ENCODE measurements at regions of chr3 and their contacts with region 1.

Region 1: GRCh38 chr3:17233398-17233800 is 348.6 kb downstream of the PLCL2 start:
- DNase-seq: no peak
- ATAC-seq: peak; percentile 91 to 95
- H3K4me3 ChIP-seq: no peak overlapping the region
- H3K27ac ChIP-seq: peak overlapping the region in 2 of 4 donors; percentile 48 to 61
- H3K4me1 ChIP-seq: peaks cover 35 to 38% of the 10 kb centered on the region in 2 donors
- H3K27me3 ChIP-seq: no peaks in the 10 kb centered on the region
- CTCF ChIP-seq: peak; percentile 63 to 80 (median 76)
- POLR2A ChIP-seq: no peak

Region 2: GRCh38 chr3:16589867-16590624 is 643.4 kb before region 1 on chr3:
- in situ Hi-C with region 1: loop called in 3 of 4 experiments (anchors 5 to 10 kb)
- intact Hi-C with region 1: no loop called
- DNase-seq: no peak
- ATAC-seq: no peak
- H3K4me3 ChIP-seq: no peak overlapping the region
- H3K27ac ChIP-seq: no peak overlapping the region
- H3K4me1 ChIP-seq: no peaks in the 10 kb centered on the region
- H3K27me3 ChIP-seq: no peaks in the 10 kb centered on the region
- CTCF ChIP-seq: no peak
- POLR2A ChIP-seq: no peak

Region 3: GRCh38 chr3:16600780-16601539 is 632.4 kb before region 1 on chr3:
- in situ Hi-C with region 1: loop called in 3 of 4 experiments (anchors 5 to 10 kb)
- intact Hi-C with region 1: loop called (anchors 1 kb)
- DNase-seq: peak; percentile 50 to 66
- ATAC-seq: peak; percentile 72 to 87
- H3K4me3 ChIP-seq: no peak overlapping the region
- H3K27ac ChIP-seq: no peak overlapping the region
- H3K4me1 ChIP-seq: peaks cover 0 to 5% of the 10 kb centered on the region in 2 donors
- H3K27me3 ChIP-seq: no peaks in the 10 kb centered on the region
- CTCF ChIP-seq: peak; percentile 79 to 92 (median 88)
- POLR2A ChIP-seq: no peak

Region 4: DNA sequence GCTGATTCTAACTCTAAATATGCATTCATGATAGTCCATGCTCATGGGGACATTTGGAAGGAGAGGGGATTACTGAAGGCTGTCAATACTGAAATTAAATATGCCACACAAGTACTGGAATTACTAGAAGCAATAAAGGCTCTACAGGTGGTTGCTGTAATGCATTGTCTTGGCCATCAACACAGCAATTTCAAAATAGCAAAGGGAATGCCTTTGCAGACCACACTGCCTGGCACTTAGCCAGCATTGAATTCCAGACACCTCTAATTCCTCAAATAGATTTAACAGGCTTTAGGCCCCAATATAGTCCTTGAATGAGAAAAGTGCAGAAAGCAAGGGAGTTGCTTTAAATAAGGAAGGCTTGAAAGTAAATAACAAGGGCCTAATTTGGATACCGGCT is 464.4 kb before region 1 on chr3:
- in situ Hi-C with region 1: no loop called
- intact Hi-C with region 1: loop called (anchors 10 kb)
- DNase-seq: no peak
- ATAC-seq: no peak
- H3K4me3 ChIP-seq: no peak overlapping the region
- H3K27ac ChIP-seq: peak overlapping the region; percentile 76 to 94 (median 82)
- H3K4me1 ChIP-seq: peaks cover 43% of the 10 kb centered on the region in 2 donors
- H3K27me3 ChIP-seq: no peaks in the 10 kb centered on the region
- CTCF ChIP-seq: no peak
- POLR2A ChIP-seq: no peak

Region 5: DNA sequence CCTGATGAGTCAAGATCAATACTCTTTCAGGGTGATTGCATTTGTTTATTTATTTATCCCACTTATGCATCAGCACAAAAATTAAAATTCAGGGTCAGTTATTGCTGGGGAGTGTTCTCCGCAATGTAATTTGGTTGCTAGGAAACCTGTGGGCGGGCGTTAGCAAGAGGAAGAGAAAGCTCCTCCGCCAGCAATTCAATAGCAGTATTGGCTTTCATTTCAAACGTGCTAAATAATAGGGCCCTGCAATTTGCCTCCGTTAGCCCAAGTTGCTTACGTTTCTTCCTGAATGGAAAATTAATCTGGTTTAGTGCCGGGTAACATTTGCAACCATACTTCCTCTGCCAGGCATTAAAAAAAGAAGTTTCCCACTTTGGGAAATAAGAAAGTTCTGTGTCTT is 384.2 kb before region 1 on chr3:
- in situ Hi-C with region 1: no loop called
- intact Hi-C with region 1: loop called (anchors 10 kb)
- DNase-seq: peak; percentile 44 to 61
- ATAC-seq: peak; percentile 69 to 70
- H3K4me3 ChIP-seq: peak overlapping the region; percentile 31 to 47 (median 42)
- H3K27ac ChIP-seq: peak overlapping the region; percentile 46 to 90 (median 66)
- H3K4me1 ChIP-seq: peaks cover 42 to 43% of the 10 kb centered on the region in 2 donors
- H3K27me3 ChIP-seq: no peaks in the 10 kb centered on the region
- CTCF ChIP-seq: no peak
- POLR2A ChIP-seq: no peak

Region 6: DNA sequence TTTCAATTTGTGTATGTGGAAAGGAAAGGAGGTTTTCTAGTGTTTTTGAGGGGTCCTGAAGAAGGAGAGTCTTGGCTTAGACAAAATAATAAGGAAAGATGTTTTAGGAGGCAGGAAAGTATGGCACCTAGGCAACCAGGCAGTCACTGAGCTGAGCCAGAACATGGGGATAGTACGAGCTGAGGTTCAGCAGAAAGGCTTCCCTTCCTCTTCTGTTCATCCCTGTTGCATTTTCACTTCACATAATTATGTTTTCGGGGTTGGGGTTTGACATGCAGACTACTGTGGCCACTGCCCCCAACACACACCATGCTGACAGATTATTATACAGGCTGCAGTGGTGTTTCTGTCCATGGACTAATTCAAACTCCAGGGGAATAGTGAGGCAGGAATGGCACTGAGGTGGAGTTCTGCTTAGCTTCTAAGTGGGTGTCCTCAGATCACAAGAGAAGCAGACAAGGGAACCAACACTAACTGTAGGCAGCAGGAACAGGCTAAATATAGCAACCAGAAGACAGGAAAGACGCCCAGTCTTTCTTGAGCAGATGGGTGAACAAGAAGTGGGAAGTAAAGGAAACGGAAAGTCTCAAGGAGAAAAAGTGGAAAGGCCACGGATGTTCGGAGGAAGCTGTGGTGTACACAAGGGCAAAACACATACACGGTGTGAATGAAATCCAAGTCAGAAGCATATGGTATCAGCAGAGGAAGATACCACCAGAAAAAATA is 42.9 kb before region 1 on chr3:
- in situ Hi-C with region 1: no loop called
- intact Hi-C with region 1: loop called (anchors 5 kb)
- DNase-seq: peak; percentile 23 to 55
- ATAC-seq: peak; percentile 83 to 84
- H3K4me3 ChIP-seq: peak overlapping the region in 1 of 4 donors; percentile 11
- H3K27ac ChIP-seq: peak overlapping the region; percentile 76 to 86 (median 85)
- H3K4me1 ChIP-seq: peaks cover 45 to 55% of the 10 kb centered on the region in 2 donors
- H3K27me3 ChIP-seq: no peaks in the 10 kb centered on the region
- CTCF ChIP-seq: no peak
- POLR2A ChIP-seq: no peak